ENCODE measurements at regions of chr6 and their contacts with region 1.

Region 1: DNA sequence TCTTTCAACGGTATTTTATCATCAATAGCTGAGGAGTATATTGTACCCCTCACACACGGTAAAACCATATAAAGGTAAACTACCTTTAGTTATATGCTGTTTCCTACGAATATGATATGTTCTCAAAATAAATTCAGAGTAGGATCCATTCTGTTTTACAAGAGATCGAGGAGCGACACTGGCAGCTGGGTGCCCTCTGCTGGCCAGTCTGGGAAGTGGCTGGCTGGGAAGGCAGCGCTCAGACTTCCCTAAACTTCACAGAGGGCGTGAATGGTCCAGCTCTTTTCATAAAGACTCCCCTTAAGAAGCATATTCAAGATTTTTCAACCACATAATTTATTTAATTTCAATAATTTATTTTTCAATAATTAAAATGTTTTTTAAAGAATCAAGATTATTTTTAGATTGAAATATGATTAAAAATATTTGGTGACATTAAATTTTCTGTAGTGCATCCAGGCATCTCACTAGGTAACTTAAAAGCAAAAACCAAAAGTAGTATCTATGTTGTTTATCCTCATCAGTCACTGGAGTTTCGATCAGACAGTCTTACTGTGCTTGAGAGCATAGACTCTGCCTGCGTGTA is 187.5 kb upstream of the PDE10A start:
- DNase-seq: peak; percentile 87
- H3K4me3 ChIP-seq: no peak overlapping the region
- H3K27ac ChIP-seq: no peak overlapping the region
- H3K4me1 ChIP-seq: peaks cover 0 to 26% (median 16%) of the 10 kb centered on the region in 4 donors
- H3K27me3 ChIP-seq: peaks cover 10 to 33% (median 15%) of the 10 kb centered on the region in 3 donors
- CTCF ChIP-seq: peak; percentile 46 to 95 (median 84)
- EP300 ChIP-seq: no peak
- POLR2A ChIP-seq: no peak

Region 2: DNA sequence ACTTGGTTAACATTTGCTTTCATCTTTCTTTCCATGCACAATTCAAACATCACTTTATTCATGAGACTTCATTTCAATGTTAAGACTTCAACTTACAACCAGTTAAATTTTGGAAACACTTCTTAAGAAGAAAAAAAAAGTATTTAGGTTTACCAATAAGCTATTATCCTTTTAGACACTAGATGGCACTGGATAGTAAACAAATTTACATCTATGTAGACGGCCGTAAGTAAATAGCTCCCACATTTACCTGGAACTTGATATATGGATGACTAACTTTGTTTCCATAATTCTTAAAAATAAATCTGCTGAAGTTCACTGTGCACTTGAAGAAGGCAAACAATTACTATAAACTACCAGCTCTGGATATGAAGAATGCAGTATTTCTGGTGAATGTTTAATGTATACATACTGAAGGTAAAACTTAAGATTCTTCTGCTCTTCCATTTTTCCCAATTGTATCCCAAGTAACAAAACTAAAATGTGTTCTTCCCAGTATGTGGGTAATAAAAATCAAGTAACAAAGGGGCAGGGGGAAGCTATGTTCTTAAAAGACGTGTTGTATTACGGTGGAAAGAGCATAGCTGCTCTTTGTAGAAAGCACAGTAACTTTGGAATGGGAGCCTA is 410.5 kb before region 1 on chr6:
- intact Hi-C with region 1: loop called (anchors 5 kb)
- DNase-seq: no peak
- H3K4me3 ChIP-seq: no peak overlapping the region
- H3K27ac ChIP-seq: no peak overlapping the region
- H3K4me1 ChIP-seq: no peaks in the 10 kb centered on the region
- H3K27me3 ChIP-seq: no peaks in the 10 kb centered on the region
- CTCF ChIP-seq: peak in 1 of 4 experiments; percentile 37
- EP300 ChIP-seq: no peak
- POLR2A ChIP-seq: no peak

Region 3: DNA sequence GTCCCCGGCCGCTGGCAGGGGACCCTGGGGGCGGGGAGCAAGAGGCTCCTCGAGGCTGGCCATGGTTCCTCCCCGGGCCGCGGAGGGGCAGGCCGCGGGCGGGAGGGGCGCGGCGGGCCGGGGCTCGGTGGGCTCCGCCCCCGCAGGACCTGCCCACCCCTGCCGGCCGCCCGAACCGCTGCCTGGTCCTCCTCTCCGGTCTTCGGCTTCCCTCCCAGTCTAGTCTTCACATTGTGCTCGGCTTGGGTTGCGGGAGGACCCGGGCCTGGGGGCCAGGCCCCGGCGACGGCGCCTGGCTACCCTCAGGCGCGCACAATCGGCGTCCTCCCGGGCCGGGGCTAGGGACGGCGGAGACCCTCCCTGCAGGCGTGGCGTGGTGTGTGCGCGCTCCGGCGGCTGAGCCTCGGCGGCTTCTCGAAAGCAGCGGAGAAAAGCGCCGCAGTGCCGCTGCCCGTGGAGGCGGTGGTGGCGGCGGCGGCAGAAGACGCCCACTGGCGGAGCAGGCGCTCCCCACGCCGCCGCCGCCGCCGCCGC is 187.7 kb before region 1 on chr6 and contains the start of gene PDE10A:
- intact Hi-C with region 1: loop called (anchors 5 kb)
- DNase-seq: peak; percentile 80
- H3K4me3 ChIP-seq: peak within 1 kb of the TSS; percentile 43 to 63 (median 56)
- H3K27ac ChIP-seq: peak within 1 kb of the TSS; percentile 64 to 72 (median 66)
- H3K4me1 ChIP-seq: peaks cover 0 to 41% (median 37%) of the 10 kb centered on the region in 4 donors
- H3K27me3 ChIP-seq: peaks cover 34 to 94% (median 74%) of the 10 kb centered on the region in 3 donors
- CTCF ChIP-seq: no peak
- EP300 ChIP-seq: no peak
- POLR2A ChIP-seq: no peak
- total RNA-seq, gene PDE10A: 7.4 to 33.5 (median 13.5) TPM

Region 4: GRCh38 chr6:165729307-165729936 is 121.1 kb before region 1 on chr6:
- intact Hi-C with region 1: loop called (anchors 5 kb)
- DNase-seq: no peak
- H3K4me3 ChIP-seq: no peak overlapping the region
- H3K27ac ChIP-seq: no peak overlapping the region
- H3K4me1 ChIP-seq: peaks cover 0 to 5% (median 0%) of the 10 kb centered on the region in 4 donors
- H3K27me3 ChIP-seq: no peaks in the 10 kb centered on the region
- CTCF ChIP-seq: peak in 3 of 4 experiments; percentile 47 to 77 (median 54)
- EP300 ChIP-seq: no peak
- POLR2A ChIP-seq: no peak

Region 5: DNA sequence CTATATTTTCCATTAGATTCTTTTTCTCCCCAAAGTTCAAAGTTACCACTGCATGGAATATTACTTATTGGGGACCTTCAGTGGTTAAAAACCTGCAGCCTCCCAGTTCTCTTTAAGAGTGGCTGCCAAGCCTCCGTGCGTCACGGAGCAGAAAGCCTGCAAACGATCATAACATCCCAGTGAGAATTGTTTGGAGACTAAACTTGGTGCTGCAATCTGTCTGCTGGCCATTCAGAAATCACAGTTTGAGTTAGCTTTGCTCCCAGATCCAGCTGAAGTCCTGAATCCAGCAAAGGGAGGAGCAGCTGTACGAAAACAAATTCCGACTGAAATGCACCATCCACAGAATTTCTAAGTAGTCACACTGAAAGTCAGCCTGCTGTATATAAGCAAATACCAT is 26.1 kb after region 1 on chr6:
- intact Hi-C with region 1: loop called (anchors 2 kb)
- DNase-seq: peak; percentile 95
- H3K4me3 ChIP-seq: peak overlapping the region in 3 of 4 donors; percentile 2 to 6 (median 3)
- H3K27ac ChIP-seq: peak overlapping the region; percentile 72 to 84 (median 78)
- H3K4me1 ChIP-seq: peaks cover 0 to 49% (median 32%) of the 10 kb centered on the region in 4 donors
- H3K27me3 ChIP-seq: no peaks in the 10 kb centered on the region
- CTCF ChIP-seq: no peak
- EP300 ChIP-seq: peak; percentile 76 to 98 (median 94)
- POLR2A ChIP-seq: no peak

Measured in sigmoid colon (tissue), 7 donors.